A549 (cell line): ENCODE measurements at regions of chr12 and their contacts with region 1.

Region 1: DNA sequence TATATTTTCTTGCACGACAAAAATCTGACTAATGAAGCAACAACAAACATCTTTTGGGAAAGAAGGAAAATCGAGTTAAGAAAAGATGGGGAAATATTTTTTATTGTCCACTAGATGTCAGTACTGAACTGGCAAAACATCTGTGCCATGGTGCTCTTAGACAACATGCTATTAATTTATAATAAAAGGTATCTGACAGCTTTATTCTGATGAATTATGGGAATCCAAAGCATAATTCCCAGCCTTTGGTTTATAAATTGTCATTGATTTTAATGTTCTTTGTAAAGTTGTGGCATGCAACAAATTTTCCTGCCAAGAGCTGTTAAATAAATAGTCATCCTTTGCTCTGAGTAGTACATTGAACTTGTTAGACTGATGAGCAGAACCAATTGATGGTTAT is 231.2 kb downstream of the ETNK1 start:
- DNase-seq: peak; percentile 8 to 49
- ATAC-seq: peak in 1 of 2 experiments; percentile 57; a peak in 2 of 6 replicates
- H3K4me3 ChIP-seq: no peak overlapping the region
- H3K27ac ChIP-seq: no peak overlapping the region
- H3K4me1 ChIP-seq: no peaks in the 10 kb centered on the region
- CTCF ChIP-seq: peak; percentile 84
- EP300 ChIP-seq: no peak
- POLR2A ChIP-seq: no peak
- RAD21 ChIP-seq: peak; percentile 85 to 86

Region 2: DNA sequence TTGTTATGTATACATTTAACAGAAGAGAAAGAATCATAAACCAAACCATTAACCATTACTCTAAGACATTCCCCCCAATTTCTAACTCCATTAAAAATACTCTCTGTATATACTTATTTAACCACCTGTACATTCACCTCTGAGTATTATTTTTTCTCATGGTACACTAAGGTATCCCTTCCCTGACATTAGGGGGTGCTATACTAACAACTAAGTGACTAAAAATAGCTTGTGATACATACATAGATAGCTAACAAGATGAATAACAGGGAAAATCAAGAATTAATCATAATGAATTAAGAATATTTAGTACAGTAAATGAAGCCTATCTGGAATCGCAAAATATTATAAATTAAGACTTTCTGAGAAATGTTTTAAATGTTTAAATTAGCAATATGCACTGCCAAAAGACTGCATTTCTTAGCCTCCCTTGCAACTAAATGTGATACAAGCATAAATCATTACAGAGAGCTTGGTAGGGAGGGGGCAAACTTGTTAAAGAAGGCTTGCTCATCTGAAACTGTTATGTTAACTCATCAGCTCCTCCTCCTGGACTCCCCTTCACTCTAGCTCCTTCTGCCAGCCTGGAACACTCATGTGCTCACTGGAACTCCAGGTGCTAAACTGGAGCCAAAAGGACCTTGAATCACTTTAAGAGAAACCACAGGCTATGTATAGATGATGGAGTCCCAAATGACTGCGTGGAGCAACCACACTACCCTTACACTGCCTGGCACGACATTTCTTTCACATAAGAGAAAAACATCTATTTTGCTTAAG is 326.7 kb before region 1 on chr12:
- CTCF ChIA-PET with region 1: no interaction called
- POLR2A ChIA-PET with region 1: no interaction called
- DNase-seq: peak; percentile 19 to 62
- ATAC-seq: peak; percentile 86 to 91
- H3K4me3 ChIP-seq: no peak overlapping the region
- H3K27ac ChIP-seq: no peak overlapping the region
- H3K4me1 ChIP-seq: peaks cover 25% of the 10 kb centered on the region; the same call in 2 of the 3 replicates
- CTCF ChIP-seq: peak; percentile 59
- EP300 ChIP-seq: no peak
- POLR2A ChIP-seq: no peak
- RAD21 ChIP-seq: peak; percentile 67

Region 3: GRCh38 chr12:22874151-22874550 is 18.0 kb after region 1 on chr12:
- CTCF ChIA-PET with region 1: interaction called, 11 read pairs
- POLR2A ChIA-PET with region 1: no interaction called
- DNase-seq: no peak
- ATAC-seq: no peak
- H3K4me3 ChIP-seq: no peak overlapping the region
- H3K27ac ChIP-seq: no peak overlapping the region
- H3K4me1 ChIP-seq: no peaks in the 10 kb centered on the region
- CTCF ChIP-seq: no peak
- EP300 ChIP-seq: no peak
- POLR2A ChIP-seq: no peak
- RAD21 ChIP-seq: no peak

Region 4: GRCh38 chr12:22974865-22975264 is 118.7 kb after region 1 on chr12:
- CTCF ChIA-PET with region 1: no interaction called
- POLR2A ChIA-PET with region 1: no interaction called
- DNase-seq: peak; percentile 15 to 64
- ATAC-seq: peak; percentile 92
- H3K4me3 ChIP-seq: no peak overlapping the region
- H3K27ac ChIP-seq: no peak overlapping the region
- H3K4me1 ChIP-seq: peaks cover 4% of the 10 kb centered on the region; the same call in 1 of the 3 replicates
- CTCF ChIP-seq: no peak
- EP300 ChIP-seq: no peak
- POLR2A ChIP-seq: no peak
- RAD21 ChIP-seq: no peak